PC-9 (cell line): ENCODE measurements at regions of chr3 and their contacts with region 1.

Region 1: GRCh38 chr3:71176366-71176765 is 407.2 kb downstream of the FOXP1 start:
- DNase-seq: no peak
- H3K4me3 ChIP-seq: no peak overlapping the region
- H3K27ac ChIP-seq: no peak overlapping the region
- H3K4me1 ChIP-seq: no peaks in the 10 kb centered on the region
- H3K27me3 ChIP-seq: no peaks in the 10 kb centered on the region
- CTCF ChIP-seq: no peak

Region 2: GRCh38 chr3:71189480-71189879 is 13.1 kb after region 1 on chr3:
- CTCF ChIA-PET with region 1: no interaction called
- POLR2A ChIA-PET with region 1: no interaction called
- intact Hi-C with region 1: no loop called
- DNase-seq: no peak
- H3K4me3 ChIP-seq: no peak overlapping the region
- H3K27ac ChIP-seq: no peak overlapping the region
- H3K4me1 ChIP-seq: no peaks in the 10 kb centered on the region
- H3K27me3 ChIP-seq: no peaks in the 10 kb centered on the region
- CTCF ChIP-seq: no peak

Region 3: GRCh38 chr3:71341721-71342120 is 165.4 kb after region 1 on chr3:
- CTCF ChIA-PET with region 1: no interaction called
- POLR2A ChIA-PET with region 1: no interaction called
- intact Hi-C with region 1: no loop called
- DNase-seq: no peak
- H3K4me3 ChIP-seq: no peak overlapping the region
- H3K27ac ChIP-seq: no peak overlapping the region
- H3K4me1 ChIP-seq: no peaks in the 10 kb centered on the region
- H3K27me3 ChIP-seq: no peaks in the 10 kb centered on the region
- CTCF ChIP-seq: no peak

Region 4: DNA sequence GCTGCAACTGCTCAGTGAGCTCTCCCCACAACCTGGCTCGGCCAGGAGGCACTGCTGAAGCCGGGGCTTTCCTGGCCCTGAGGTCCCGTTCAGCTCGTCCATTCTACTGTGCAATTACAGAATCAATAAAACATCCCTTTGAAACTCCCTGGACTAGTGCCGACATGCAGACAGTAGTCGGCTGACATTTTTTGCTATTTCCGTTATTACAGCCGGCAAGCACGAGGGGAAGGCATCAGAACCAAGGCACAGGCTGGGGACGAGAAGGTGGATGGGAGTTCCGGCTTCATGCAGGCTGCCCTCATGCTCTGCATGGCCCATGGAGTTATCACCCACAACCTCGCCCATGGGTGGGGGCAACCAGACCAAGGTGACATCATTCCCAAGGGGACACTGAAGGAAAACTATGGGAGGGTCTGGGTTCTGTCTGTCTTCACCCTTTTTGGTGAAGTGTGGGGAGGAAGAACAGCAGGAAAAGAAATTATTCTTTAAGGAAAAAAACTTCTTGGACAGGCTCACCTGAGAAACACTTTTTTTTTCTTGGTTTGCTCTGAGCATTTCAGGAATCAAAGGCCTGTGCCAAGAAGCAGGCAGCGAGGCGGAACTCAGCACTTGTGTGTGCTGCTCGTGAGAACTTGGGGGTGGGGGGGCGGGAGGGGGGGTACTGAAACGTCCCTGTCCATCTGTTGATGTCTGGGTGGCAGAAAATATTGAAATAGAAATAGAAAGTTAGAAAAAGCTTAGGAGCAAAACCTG is 252.7 kb after region 1 on chr3:
- CTCF ChIA-PET with region 1: no interaction called
- POLR2A ChIA-PET with region 1: no interaction called
- intact Hi-C with region 1: no loop called
- DNase-seq: no peak
- H3K4me3 ChIP-seq: no peak overlapping the region
- H3K27ac ChIP-seq: no peak overlapping the region
- H3K4me1 ChIP-seq: no peaks in the 10 kb centered on the region
- H3K27me3 ChIP-seq: no peaks in the 10 kb centered on the region
- CTCF ChIP-seq: no peak

Region 5: GRCh38 chr3:71542521-71543370 is 366.4 kb after region 1 on chr3:
- CTCF ChIA-PET with region 1: no interaction called
- POLR2A ChIA-PET with region 1: interaction called, 11 read pairs
- intact Hi-C with region 1: no loop called
- DNase-seq: no peak
- H3K4me3 ChIP-seq: no peak overlapping the region
- H3K27ac ChIP-seq: no peak overlapping the region
- H3K4me1 ChIP-seq: no peaks in the 10 kb centered on the region
- H3K27me3 ChIP-seq: no peaks in the 10 kb centered on the region
- CTCF ChIP-seq: no peak